Posterior vena cava (tissue), 2 donors: ENCODE measurements at regions of chr14 and their contacts with region 1.

Region 1: GRCh38 chr14:52473557-52473956 is 78.7 kb downstream of the TXNDC16 start:
- DNase-seq: no peak

Region 2: GRCh38 chr14:52299692-52300278 is 173.8 kb before region 1 on chr14:
- intact Hi-C with region 1: loop called in 1 of 2 experiments (anchors 5 kb)
- DNase-seq: no peak

Region 3: DNA sequence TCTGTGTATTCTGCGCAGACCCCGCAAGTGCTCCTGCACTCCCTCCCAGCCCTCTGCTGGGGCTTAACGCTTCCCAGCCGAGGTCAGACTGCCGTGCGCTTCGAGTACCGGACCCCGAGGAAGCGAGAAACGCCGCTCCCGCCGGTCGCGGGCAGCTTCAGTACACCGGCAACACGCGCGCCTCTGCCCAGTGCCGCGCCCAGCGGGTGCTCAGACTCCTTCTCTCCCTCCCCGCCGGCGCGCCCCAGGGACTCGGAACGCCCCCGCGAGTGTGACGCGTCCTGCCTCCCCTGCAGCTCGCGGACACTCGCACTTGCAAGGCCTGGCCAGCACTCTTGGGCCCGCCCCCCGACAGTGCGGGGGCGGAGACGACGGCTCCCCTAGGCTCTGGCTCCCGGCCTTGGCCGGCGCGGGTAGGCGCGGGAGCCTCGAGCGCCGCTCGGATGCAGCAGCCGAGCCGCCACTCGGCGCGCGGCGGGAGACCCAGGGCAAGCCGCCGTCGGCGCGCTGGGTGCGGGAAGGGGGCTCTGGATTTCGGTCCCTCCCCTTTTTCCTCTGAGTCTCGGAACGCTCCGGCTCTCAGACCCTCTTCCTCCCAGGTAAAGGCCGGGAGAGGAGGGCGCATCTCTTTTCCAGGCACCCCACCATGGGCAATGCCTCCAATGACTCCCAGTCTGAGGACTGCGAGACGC is 159.5 kb before region 1 on chr14 and contains the start of gene PTGER2:
- intact Hi-C with region 1: loop called in 1 of 2 experiments (anchors 10 kb)
- DNase-seq: peak; percentile 96
- total RNA-seq, gene PTGER2: 5.3 to 7.4 TPM